Calu3 (cell line): ENCODE measurements at regions of chr3 and their contacts with region 1.

Region 1: DNA sequence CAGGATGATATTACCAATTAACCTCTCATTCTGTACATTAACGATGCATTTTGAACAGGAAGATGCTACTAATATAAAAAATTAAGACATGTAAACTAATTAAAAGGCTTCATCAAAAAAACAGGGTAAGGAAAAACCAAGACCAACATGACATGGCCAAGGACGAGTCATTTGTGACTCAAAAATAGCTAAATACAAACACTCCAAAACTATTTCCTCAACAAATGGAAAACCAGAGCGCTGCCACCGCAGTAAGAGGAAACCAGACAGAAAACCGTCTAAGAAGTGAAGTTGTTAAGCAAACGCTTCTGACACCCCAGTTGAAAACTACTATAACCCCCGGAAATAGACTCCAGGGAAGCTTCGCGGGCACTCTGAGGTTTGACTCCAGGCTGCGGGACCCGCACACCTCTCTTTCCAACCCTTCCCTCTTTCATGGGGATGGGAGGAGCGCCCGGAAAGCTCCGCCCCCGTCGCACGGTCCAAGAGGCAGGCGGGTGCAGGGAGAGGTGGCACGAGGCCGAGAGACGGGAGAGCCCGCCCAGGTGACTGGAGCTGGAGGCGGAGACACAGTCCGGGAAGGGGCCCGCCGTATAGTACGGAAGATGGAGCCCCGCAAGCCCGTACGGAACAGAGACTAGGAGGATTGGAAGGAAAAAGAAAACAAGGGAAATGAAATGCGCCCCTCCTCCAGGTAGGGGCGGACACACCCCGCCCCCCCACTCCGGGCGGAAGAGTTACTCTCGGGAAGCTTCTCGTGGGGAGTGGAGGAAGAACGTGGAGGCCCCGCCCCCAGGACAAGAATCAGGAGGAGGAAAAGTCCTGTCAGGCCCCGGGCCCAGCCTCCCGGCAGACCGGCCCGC is 708 bp downstream of the DCAF1 start:
- DNase-seq: peak; percentile 96
- H3K4me3 Mint-ChIP-seq: peak overlapping the region; percentile 91
- H3K27ac Mint-ChIP-seq: peak overlapping the region; percentile 94
- H3K4me1 Mint-ChIP-seq: no peaks in the 10 kb centered on the region
- H3K27me3 Mint-ChIP-seq: no peaks in the 10 kb centered on the region
- CTCF ChIP-seq: no peak

Region 2: GRCh38 chr3:51511000-51511399 is 11.9 kb after region 1 on chr3:
- CTCF ChIA-PET with region 1: interaction called, 19 read pairs
- intact Hi-C with region 1: no loop called
- DNase-seq: no peak
- H3K4me3 Mint-ChIP-seq: no peak overlapping the region
- H3K27ac Mint-ChIP-seq: no peak overlapping the region
- H3K4me1 Mint-ChIP-seq: no peaks in the 10 kb centered on the region
- H3K27me3 Mint-ChIP-seq: no peaks in the 10 kb centered on the region
- CTCF ChIP-seq: no peak

Region 3: DNA sequence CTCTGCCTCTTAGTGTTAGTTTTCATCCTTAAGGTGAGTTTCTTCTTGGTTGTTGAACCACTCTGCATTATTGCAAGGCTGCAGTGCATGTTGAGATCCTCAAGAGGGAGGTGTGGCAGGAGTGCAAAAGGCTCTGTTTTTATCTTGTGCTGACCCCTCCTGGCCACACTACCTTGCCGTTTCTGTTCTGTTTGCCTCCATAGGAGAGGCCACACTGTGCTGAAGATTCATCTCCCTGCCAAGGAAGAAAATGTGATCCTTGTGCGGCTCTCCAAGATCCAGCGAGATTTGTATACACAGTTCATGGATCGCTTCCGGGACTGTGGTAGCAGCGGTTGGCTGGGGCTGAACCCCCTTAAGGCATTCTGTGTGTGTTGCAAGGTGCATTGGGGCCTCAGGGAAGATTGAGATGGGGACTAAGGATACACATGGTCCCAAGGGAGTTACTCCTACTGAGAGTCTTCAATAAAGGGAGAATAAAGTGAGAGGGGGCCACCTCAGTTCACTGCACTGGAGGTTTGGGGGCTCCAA is 138.9 kb after region 1 on chr3:
- CTCF ChIA-PET with region 1: interaction called, 4 read pairs
- intact Hi-C with region 1: loop called (anchors 1 kb)
- DNase-seq: peak; percentile 58
- H3K4me3 Mint-ChIP-seq: no peak overlapping the region
- H3K27ac Mint-ChIP-seq: no peak overlapping the region
- H3K4me1 Mint-ChIP-seq: no peaks in the 10 kb centered on the region
- H3K27me3 Mint-ChIP-seq: no peaks in the 10 kb centered on the region
- CTCF ChIP-seq: peak; percentile 78

Region 4: GRCh38 chr3:51670823-51671733 is 172.0 kb after region 1 on chr3 and contains the start of gene TEX264:
- CTCF ChIA-PET with region 1: interaction called, 35 read pairs
- intact Hi-C with region 1: loop called (anchors 1 kb)
- DNase-seq: peak; percentile 89
- H3K4me3 Mint-ChIP-seq: peak within 1 kb of the TSS; percentile 97
- H3K27ac Mint-ChIP-seq: peak within 1 kb of the TSS; percentile 76
- H3K4me1 Mint-ChIP-seq: peaks cover 26% of the 10 kb centered on the region
- H3K27me3 Mint-ChIP-seq: no peaks in the 10 kb centered on the region
- CTCF ChIP-seq: no peak
- total RNA-seq, gene TEX264: 37.0 and 44.9 TPM in 2 replicates

Region 5: GRCh38 chr3:51682079-51682478 is 183.0 kb after region 1 on chr3:
- CTCF ChIA-PET with region 1: interaction called, 31 read pairs
- intact Hi-C with region 1: loop called (anchors 5 kb)
- DNase-seq: peak; percentile 67
- H3K4me3 Mint-ChIP-seq: no peak overlapping the region
- H3K27ac Mint-ChIP-seq: no peak overlapping the region
- H3K4me1 Mint-ChIP-seq: peaks cover 19% of the 10 kb centered on the region
- H3K27me3 Mint-ChIP-seq: no peaks in the 10 kb centered on the region
- CTCF ChIP-seq: peak; percentile 54

Region 6: DNA sequence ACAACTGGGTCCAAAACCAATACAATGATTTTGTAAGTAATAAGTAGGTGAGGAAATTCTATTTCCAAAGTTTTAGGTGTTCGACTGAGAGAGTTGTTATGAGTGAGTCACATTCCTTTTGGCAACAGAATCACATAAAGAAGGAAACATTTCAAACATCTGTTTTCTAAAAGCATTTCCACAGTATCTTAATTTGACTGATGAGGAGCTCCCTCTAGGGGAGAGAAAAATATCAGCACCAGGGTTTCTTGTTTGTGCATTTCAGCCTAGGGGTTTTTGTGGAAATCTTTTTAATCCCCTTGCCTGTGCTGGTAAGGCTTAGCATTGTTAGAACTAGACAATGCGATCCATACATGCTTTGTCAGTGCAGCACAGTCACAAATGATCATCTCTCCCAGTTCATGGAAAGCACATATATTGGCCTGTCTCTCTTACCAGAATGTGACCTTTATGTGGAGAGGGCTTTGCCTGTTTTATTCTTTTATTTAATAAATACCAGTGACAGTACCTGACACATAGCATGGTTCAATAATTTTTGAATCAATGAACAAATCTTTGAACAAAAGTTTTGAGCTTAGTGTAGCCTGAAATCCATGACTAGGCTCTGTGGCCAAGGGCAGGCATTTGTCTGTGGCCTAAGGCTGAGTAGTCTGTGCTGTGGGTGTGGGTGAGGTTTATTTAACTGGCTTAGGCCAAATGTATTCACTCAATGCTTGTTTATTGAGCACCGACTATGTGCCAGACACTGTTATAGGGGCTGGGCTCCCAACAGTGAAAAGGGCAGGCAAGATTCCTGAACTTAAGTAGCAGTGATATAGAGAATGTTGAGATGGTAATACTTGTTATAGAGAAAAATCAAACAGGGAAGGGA is 301.0 kb after region 1 on chr3:
- CTCF ChIA-PET with region 1: interaction called, 4 read pairs
- intact Hi-C with region 1: loop called (anchors 10 kb)
- DNase-seq: peak; percentile 59
- H3K4me3 Mint-ChIP-seq: no peak overlapping the region
- H3K27ac Mint-ChIP-seq: no peak overlapping the region
- H3K4me1 Mint-ChIP-seq: peaks cover 8% of the 10 kb centered on the region
- H3K27me3 Mint-ChIP-seq: peaks cover 11% of the 10 kb centered on the region
- CTCF ChIP-seq: peak; percentile 58